Sciatic nerve (tissue), 2 donors: ENCODE measurements at regions of chr14 and their contacts with region 1.

Region 1: GRCh38 chr14:89416002-89416995 is 734 bp downstream of the FOXN3 start:
- DNase-seq: peak; percentile 100
- ATAC-seq: peak; percentile 93

Region 2: GRCh38 chr14:87830443-87831096 is 1585.7 kb before region 1 on chr14:
- intact Hi-C with region 1: no loop called
- DNase-seq: no peak
- ATAC-seq: no peak

Region 3: DNA sequence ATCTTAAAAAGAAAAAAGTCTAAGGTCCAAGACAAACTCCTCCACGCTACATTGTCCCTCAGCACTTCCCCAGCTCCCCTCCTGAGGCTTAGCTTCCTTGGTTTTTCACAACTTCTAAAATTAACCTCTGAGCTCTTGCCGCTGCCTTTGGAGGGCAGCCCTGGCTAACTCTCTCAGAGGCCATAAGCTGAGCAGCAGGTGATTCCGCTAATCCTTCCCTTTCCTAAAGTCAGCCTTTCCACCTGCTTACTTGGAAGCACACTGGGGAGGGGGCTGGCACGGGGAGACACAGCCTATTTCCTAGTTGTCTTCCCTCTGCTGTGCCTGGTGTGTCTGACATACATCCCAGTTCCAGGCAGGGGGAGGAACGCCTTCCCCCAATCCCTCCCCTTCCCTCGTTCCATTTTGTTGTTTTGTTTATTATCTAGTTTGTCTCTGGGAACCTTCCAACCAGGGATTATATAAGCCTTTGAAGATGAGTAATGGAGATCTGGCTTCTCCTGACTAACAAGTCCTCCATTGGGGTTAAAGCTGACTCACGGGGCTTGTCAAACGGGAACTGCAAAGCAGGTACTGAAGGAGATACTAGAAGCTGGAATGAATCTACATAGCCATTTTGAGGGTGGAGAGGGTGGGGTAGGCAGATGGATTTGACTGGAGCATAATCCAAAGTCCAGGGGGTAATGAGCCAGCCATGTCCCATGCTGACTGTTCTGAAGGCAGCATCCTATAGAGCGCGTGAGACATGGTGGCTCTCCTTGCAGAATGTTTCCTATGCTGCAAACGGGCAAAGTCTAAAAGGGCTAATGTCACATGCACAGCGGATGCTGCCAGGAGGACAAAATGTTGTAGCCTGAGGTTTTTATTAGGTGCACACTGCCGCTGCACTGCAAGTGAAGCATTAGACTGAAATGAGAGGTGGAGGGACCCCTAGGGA is 230.1 kb before region 1 on chr14:
- intact Hi-C with region 1: loop called (anchors 10 kb)
- DNase-seq: no peak
- ATAC-seq: peak; percentile 54

Region 4: GRCh38 chr14:89540830-89541470 is 124.7 kb after region 1 on chr14:
- intact Hi-C with region 1: no loop called
- DNase-seq: no peak
- ATAC-seq: no peak